ENCODE measurements at regions of chr10 and their contacts with region 1.

Region 1: GRCh38 chr10:75401569-75402485 is at the start of gene ZNF503:
- DNase-seq: peak; percentile 97 to 99 (median 98)
- H3K4me3 ChIP-seq: peak within 1 kb of the TSS; percentile 93
- H3K27ac ChIP-seq: peak within 1 kb of the TSS; percentile 98
- H3K4me1 ChIP-seq: peaks cover 4% of the 10 kb centered on the region
- H3K27me3 ChIP-seq: no peaks in the 10 kb centered on the region
- CTCF ChIP-seq: peak; percentile 27 to 80 (median 70)
- EP300 ChIP-seq: peak; percentile 50
- POLR2A ChIP-seq: peak; percentile 94
- total RNA-seq, gene ZNF503: 33.4 to 221 (median 82.2) TPM

Region 2: GRCh38 chr10:75294866-75295701 is 106.7 kb before region 1 on chr10:
- intact Hi-C with region 1: loop called in 2 of 4 experiments (anchors 5 to 10 kb)
- DNase-seq: peak; percentile 79 to 86 (median 83)
- H3K4me3 ChIP-seq: peak overlapping the region; percentile 59
- H3K27ac ChIP-seq: peak overlapping the region; percentile 76 to 95
- H3K4me1 ChIP-seq: peaks cover 11% of the 10 kb centered on the region
- H3K27me3 ChIP-seq: no peaks in the 10 kb centered on the region
- CTCF ChIP-seq: peak in 2 of 3 donors; percentile 50 to 66
- EP300 ChIP-seq: no peak
- POLR2A ChIP-seq: peak; percentile 35

Region 3: GRCh38 chr10:75651417-75651816 is 249.6 kb after region 1 on chr10:
- intact Hi-C with region 1: loop called in 3 of 4 experiments (anchors 10 kb)
- DNase-seq: no peak
- H3K4me3 ChIP-seq: no peak overlapping the region
- H3K27ac ChIP-seq: no peak overlapping the region
- H3K4me1 ChIP-seq: peaks cover 14% of the 10 kb centered on the region
- H3K27me3 ChIP-seq: no peaks in the 10 kb centered on the region
- CTCF ChIP-seq: no peak
- EP300 ChIP-seq: no peak
- POLR2A ChIP-seq: no peak

Region 4: DNA sequence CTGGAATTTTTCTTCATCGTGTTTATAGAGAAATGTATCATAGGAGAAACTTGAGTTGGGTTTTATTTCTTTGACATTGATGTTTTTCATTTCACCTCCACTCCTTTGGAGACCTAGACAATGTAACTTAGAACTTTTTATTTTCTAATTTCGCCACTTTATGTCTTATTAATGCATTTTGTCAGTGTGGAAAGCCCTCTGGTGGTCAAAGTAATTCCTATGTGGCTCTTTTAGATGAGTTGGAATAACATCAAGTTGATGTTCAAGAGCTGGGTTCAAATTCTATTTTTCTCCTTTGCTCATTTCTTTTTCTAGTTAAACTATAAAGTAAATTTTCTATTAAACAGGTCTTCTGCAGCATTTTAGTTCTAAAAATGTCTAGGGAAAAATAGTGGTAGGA is 508.2 kb after region 1 on chr10:
- intact Hi-C with region 1: loop called (anchors 5 to 10 kb)
- DNase-seq: no peak
- H3K4me3 ChIP-seq: no peak overlapping the region
- H3K27ac ChIP-seq: no peak overlapping the region
- H3K4me1 ChIP-seq: no peaks in the 10 kb centered on the region
- H3K27me3 ChIP-seq: no peaks in the 10 kb centered on the region
- CTCF ChIP-seq: peak in 2 of 3 donors; percentile 50 to 53
- EP300 ChIP-seq: no peak
- POLR2A ChIP-seq: no peak

Region 5: DNA sequence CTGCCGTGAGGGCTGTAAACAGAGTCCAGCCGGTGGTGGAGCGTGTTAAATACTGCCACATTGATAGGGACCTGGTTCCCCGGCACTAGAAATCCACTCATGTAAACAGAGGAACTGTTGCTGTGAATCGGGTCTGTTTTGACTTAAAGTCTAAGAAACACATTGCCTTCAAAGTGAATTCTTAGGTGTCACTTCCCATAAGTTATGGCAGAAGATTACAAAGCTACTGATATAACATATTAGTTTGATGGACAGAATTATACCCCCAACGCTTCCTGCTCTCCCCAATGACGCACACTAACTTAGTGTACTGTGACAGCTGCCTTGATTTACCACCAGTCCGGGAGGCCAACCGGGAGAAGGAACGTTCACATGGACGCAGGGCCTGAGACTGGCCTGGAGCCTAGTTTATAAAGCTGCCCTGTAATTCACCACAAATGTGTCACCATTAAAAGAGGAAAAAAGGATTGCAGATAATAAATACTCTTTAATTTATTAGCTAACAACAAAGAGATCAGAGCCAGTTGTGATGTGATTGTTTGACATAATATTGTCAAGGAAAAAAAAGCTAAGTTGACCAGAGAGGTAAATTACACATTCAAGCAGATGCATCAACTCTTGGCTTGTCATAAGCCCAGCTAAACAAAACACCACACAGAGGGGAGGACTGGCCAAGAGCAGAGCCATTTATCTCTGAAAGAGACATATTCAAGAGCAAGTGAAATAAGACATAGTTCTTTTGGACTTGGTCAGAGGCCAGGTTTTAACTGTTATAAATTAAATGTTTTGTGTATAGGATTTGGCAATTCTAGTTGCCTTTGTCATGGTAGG is 850.2 kb after region 1 on chr10:
- intact Hi-C with region 1: loop called in 1 of 4 experiments (anchors 5 kb)
- DNase-seq: peak; percentile 83 to 97 (median 90)
- H3K4me3 ChIP-seq: no peak overlapping the region
- H3K27ac ChIP-seq: peak overlapping the region; percentile 23 to 85
- H3K4me1 ChIP-seq: peaks cover 21% of the 10 kb centered on the region
- H3K27me3 ChIP-seq: no peaks in the 10 kb centered on the region
- CTCF ChIP-seq: no peak
- EP300 ChIP-seq: peak; percentile 53
- POLR2A ChIP-seq: no peak

Region 6: DNA sequence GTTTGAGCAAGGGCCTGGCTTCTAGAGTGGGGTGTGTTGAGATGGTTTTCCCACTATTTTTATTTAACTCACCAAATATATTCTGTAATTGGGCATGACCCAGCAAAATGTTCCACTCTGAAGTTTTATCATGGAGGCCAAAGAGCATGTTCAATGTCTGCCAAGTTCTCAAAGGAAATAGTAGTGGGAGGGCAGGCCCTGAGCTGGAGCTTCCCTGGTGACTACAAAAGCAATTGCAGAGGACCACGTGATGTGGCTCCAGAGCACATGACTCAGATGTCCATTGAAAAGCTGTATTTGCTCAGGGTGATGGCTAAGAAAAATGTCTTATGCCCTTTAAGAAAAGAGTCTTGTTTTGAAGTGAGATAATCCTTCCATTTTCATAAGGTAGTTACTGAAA is 1054.4 kb after region 1 on chr10:
- intact Hi-C with region 1: no loop called
- DNase-seq: peak in 1 of 5 donors; percentile 24
- H3K4me3 ChIP-seq: no peak overlapping the region
- H3K27ac ChIP-seq: no peak overlapping the region
- H3K4me1 ChIP-seq: peaks cover 1% of the 10 kb centered on the region
- H3K27me3 ChIP-seq: no peaks in the 10 kb centered on the region
- CTCF ChIP-seq: no peak
- EP300 ChIP-seq: no peak
- POLR2A ChIP-seq: no peak

Region 7: GRCh38 chr10:76547352-76547972 is 1145.6 kb after region 1 on chr10:
- intact Hi-C with region 1: loop called in 2 of 4 experiments (anchors 5 kb)
- DNase-seq: peak; percentile 78 to 92 (median 84)
- H3K4me3 ChIP-seq: no peak overlapping the region
- H3K27ac ChIP-seq: no peak overlapping the region
- H3K4me1 ChIP-seq: peaks cover 6% of the 10 kb centered on the region
- H3K27me3 ChIP-seq: no peaks in the 10 kb centered on the region
- CTCF ChIP-seq: peak; percentile 76 to 83 (median 82)
- EP300 ChIP-seq: no peak
- POLR2A ChIP-seq: no peak

Region 8: GRCh38 chr10:77011874-77012811 is 1610.3 kb after region 1 on chr10:
- intact Hi-C with region 1: loop called in 1 of 4 experiments (anchors 10 kb)
- DNase-seq: no peak
- H3K4me3 ChIP-seq: no peak overlapping the region
- H3K27ac ChIP-seq: no peak overlapping the region
- H3K4me1 ChIP-seq: no peaks in the 10 kb centered on the region
- H3K27me3 ChIP-seq: no peaks in the 10 kb centered on the region
- CTCF ChIP-seq: no peak
- EP300 ChIP-seq: no peak
- POLR2A ChIP-seq: no peak